ENCODE measurements at regions of chr11 and their contacts with region 1.

Region 1: DNA sequence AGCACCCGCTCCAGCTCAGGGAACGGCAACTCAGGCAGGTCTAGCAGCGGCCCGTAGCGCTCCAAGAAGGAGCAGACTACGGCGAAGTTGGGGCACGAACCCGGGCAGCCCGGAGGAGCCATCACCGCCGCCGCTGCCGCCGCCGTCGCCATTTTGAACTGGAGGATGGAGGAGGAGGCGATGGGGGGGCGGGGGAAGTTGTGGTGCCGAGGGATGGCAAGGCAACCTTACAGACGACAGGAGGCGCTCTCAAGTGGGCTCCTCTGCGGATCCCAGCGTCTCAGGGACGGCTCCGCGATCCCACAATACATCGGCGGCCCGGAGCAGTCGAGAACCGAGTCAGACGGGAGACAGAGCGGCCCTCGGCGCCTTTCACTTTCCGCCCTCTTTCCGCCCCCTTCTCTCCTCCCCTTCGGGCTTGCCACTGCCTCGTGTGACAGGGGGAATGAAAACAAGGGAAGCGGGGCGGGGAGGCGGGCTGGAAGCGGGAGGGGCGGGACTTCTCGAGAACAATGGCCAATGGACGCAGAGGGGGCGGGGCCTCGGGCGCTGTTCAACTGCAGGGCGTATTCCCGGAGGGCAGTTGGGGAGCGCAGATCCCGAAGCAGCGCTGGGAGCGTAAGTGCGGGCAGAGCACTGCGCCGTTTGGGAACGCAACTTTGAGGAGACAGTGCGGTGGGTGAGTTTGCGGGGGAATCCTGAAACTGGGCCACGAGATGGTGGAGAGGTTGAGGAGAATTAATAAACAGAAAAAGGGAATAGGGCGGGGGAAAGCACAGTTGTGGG is at the starts of genes AAMDC and RSF1:
- DNase-seq: peak; percentile 99
- H3K4me3 Mint-ChIP-seq: peak within 1 kb of the TSS; percentile 93
- H3K27ac Mint-ChIP-seq: peak within 1 kb of the TSS; percentile 90
- H3K4me1 Mint-ChIP-seq: peaks cover 7% of the 10 kb centered on the region
- H3K27me3 Mint-ChIP-seq: no peaks in the 10 kb centered on the region
- CTCF ChIP-seq: peak; percentile 72
- total RNA-seq, gene AAMDC: 13.0 and 13.2 TPM in 2 replicates
- total RNA-seq, gene RSF1: 62.0 and 71.2 TPM in 2 replicates

Region 2: DNA sequence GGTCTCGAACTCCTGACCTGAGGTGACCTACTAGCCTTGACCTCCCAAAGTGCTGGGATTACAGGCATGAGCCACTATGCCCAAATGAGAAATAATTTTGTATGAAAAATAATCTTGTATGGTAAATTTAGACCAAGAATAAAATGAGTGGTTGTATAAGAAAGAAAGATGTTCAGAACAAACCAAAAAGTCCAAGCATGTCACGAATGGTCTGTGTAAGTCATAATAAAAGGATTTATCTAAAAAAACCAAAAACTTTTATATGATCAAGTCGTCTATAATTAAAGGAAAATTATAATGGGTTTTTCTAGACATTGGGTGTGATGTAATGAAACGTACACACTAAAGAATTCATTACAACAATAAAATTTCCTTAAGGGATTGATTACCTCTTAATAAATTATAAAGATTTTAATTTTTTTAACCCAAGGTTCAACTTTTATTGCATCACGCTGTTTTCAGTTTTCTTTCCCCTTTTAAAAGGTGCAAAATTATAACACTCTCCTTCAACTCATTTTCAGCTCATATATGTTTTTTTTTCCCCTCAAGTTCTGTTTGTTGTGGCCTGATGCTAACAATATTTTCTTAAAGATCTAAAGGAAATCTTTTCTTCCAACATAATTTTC is 239.9 kb before region 1 on chr11:
- CTCF ChIA-PET with region 1: no interaction called
- POLR2A ChIA-PET with region 1: no interaction called
- intact Hi-C with region 1: no loop called
- DNase-seq: peak; percentile 57
- H3K4me3 Mint-ChIP-seq: no peak overlapping the region
- H3K27ac Mint-ChIP-seq: no peak overlapping the region
- H3K4me1 Mint-ChIP-seq: no peaks in the 10 kb centered on the region
- H3K27me3 Mint-ChIP-seq: no peaks in the 10 kb centered on the region
- CTCF ChIP-seq: no peak

Region 3: GRCh38 chr11:77677138-77677537 is 143.6 kb before region 1 on chr11:
- CTCF ChIA-PET with region 1: no interaction called
- POLR2A ChIA-PET with region 1: no interaction called
- intact Hi-C with region 1: no loop called
- DNase-seq: no peak
- H3K4me3 Mint-ChIP-seq: no peak overlapping the region
- H3K27ac Mint-ChIP-seq: peak overlapping the region; percentile 10
- H3K4me1 Mint-ChIP-seq: peaks cover 6% of the 10 kb centered on the region
- H3K27me3 Mint-ChIP-seq: no peaks in the 10 kb centered on the region
- CTCF ChIP-seq: no peak

Region 4: GRCh38 chr11:77726524-77726923 is 94.2 kb before region 1 on chr11:
- CTCF ChIA-PET with region 1: no interaction called
- POLR2A ChIA-PET with region 1: no interaction called
- intact Hi-C with region 1: no loop called
- DNase-seq: no peak
- H3K4me3 Mint-ChIP-seq: no peak overlapping the region
- H3K27ac Mint-ChIP-seq: no peak overlapping the region
- H3K4me1 Mint-ChIP-seq: no peaks in the 10 kb centered on the region
- H3K27me3 Mint-ChIP-seq: no peaks in the 10 kb centered on the region
- CTCF ChIP-seq: no peak

Region 5: DNA sequence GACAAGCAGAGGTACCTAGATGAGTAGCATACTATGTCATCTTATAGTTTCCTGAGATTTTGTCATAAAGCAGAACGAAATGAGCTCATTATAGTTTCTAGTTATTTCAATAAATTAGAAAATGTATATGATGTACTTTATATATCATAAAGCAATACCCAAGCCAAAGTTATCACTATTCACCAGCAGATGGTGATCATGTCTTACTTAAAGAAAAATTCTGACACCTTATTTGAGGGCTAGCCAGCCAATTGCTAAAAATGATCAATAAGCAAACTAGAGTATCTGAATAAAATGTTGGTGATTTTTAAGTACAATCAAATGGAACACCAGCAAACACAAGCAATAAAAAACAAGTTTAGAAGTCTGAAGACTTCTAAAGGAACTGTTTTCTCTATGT is 44.3 kb before region 1 on chr11:
- CTCF ChIA-PET with region 1: no interaction called
- POLR2A ChIA-PET with region 1: no interaction called
- intact Hi-C with region 1: loop called (anchors 1 kb)
- DNase-seq: peak; percentile 30
- H3K4me3 Mint-ChIP-seq: no peak overlapping the region
- H3K27ac Mint-ChIP-seq: no peak overlapping the region
- H3K4me1 Mint-ChIP-seq: no peaks in the 10 kb centered on the region
- H3K27me3 Mint-ChIP-seq: no peaks in the 10 kb centered on the region
- CTCF ChIP-seq: peak; percentile 48